Left ventricle myocardium superior (tissue), 1 donor: ENCODE measurements at regions of chr3 and their contacts with region 1.

Region 1: GRCh38 chr3:47522082-47522987 is 8.8 kb upstream of the ELP6 start:
- DNase-seq: peak; percentile 83
- ATAC-seq: peak; percentile 97

Region 2: GRCh38 chr3:47565734-47566550 is 43.6 kb after region 1 on chr3:
- intact Hi-C with region 1: no loop called
- DNase-seq: no peak
- ATAC-seq: no peak

Region 3: GRCh38 chr3:47646362-47646761 is 124.0 kb after region 1 on chr3:
- intact Hi-C with region 1: no loop called
- DNase-seq: no peak
- ATAC-seq: no peak

Region 4: GRCh38 chr3:47772788-47773187 is 250.5 kb after region 1 on chr3:
- intact Hi-C with region 1: no loop called
- DNase-seq: no peak
- ATAC-seq: no peak

Region 5: DNA sequence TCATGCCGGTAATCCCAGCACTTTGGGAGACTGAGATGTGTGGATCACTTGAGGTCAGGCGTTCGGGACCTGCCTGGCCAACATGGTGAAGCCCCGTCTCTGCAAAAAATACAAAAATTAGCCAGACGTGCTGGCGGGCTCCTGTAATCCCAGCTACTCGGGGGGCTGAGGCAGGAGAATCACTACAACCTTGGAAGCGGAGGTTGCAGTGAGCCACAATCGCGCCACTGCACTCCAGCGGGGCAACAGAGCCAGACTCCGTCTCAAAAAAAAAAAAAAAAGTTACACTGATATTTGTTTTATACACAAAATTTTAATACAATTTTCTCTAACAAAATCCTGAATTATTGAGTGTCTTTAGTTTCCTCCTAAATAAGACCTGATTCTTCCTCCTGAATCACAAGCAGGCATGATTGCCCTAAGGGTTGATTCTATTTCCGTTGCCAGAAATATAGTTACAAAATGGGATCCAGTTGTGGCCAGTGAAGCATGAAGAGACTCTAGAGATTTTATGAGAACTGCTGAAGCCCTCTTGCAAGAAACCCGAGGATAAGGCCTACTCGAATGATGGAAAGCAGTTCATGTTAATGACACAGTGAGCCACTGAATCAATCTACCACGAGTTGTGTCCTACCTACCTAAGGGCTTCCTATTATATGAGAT is 269.0 kb after region 1 on chr3:
- intact Hi-C with region 1: loop called (anchors 1 kb)
- DNase-seq: no peak
- ATAC-seq: no peak

Region 6: DNA sequence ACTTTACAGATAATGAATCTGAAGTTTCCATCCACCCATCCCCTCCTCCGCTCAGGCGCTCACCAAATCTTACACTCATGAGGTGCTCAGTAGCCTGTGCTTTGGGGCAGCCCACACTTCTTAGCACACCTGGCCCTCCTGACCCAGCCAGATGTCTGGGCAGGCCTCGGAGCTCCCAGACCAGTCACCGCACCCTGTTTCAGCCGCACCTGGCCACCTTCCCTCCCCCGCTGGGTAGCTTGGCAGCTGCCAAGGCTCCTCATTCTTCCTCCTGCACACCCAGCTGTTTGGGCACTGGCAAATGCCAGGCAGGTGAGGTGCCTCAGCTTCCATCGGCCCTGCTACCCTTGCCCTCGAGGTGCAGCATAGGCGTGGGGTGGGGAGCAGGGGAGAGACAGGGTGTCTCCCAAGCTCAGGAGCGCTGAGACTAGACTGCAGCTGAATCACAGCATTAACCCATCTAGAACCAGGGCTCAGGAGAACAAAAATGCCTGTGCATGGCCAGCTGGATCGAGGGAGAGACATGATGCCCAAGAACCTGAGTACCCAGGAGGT is 620.1 kb after region 1 on chr3:
- intact Hi-C with region 1: no loop called
- DNase-seq: no peak
- ATAC-seq: no peak